Esophagus muscularis mucosa (tissue), 4 donors: ENCODE measurements at regions of chr7 and their contacts with region 1.

Region 1: GRCh38 chr7:150988230-150989226 is 2.3 kb upstream of the NOS3 start:
- DNase-seq: no peak
- H3K4me3 ChIP-seq: peak overlapping the region in 2 of 4 donors; percentile 5 to 41
- H3K27ac ChIP-seq: peak overlapping the region in 2 of 4 donors; percentile 51 to 60
- H3K4me1 ChIP-seq: peaks cover 30 to 40% (median 36%) of the 10 kb centered on the region in 4 donors
- H3K27me3 ChIP-seq: peaks cover 0 to 5% (median 0%) of the 10 kb centered on the region in 4 donors
- CTCF ChIP-seq: peak; percentile 90 to 96 (median 92)
- EP300 ChIP-seq: no peak
- POLR2A ChIP-seq: no peak

Region 2: GRCh38 chr7:150898475-150899011 is 90.0 kb before region 1 on chr7:
- intact Hi-C with region 1: loop called (anchors 2 kb)
- DNase-seq: peak; percentile 95
- H3K4me3 ChIP-seq: no peak overlapping the region
- H3K27ac ChIP-seq: no peak overlapping the region
- H3K4me1 ChIP-seq: peaks cover 16 to 38% (median 35%) of the 10 kb centered on the region in 4 donors
- H3K27me3 ChIP-seq: peaks cover 0 to 26% (median 0%) of the 10 kb centered on the region in 4 donors
- CTCF ChIP-seq: peak in 2 of 3 experiments; percentile 91 to 96
- EP300 ChIP-seq: no peak
- POLR2A ChIP-seq: no peak

Region 3: GRCh38 chr7:150962553-150963399 is 25.8 kb before region 1 on chr7:
- intact Hi-C with region 1: loop called (anchors 2 kb)
- DNase-seq: no peak
- H3K4me3 ChIP-seq: no peak overlapping the region
- H3K27ac ChIP-seq: peak overlapping the region; percentile 79 to 82 (median 80)
- H3K4me1 ChIP-seq: peaks cover 56 to 84% (median 78%) of the 10 kb centered on the region in 4 donors
- H3K27me3 ChIP-seq: peaks cover 0 to 14% (median 0%) of the 10 kb centered on the region in 4 donors
- CTCF ChIP-seq: peak; percentile 95 to 99 (median 96)
- EP300 ChIP-seq: no peak
- POLR2A ChIP-seq: no peak

Region 4: DNA sequence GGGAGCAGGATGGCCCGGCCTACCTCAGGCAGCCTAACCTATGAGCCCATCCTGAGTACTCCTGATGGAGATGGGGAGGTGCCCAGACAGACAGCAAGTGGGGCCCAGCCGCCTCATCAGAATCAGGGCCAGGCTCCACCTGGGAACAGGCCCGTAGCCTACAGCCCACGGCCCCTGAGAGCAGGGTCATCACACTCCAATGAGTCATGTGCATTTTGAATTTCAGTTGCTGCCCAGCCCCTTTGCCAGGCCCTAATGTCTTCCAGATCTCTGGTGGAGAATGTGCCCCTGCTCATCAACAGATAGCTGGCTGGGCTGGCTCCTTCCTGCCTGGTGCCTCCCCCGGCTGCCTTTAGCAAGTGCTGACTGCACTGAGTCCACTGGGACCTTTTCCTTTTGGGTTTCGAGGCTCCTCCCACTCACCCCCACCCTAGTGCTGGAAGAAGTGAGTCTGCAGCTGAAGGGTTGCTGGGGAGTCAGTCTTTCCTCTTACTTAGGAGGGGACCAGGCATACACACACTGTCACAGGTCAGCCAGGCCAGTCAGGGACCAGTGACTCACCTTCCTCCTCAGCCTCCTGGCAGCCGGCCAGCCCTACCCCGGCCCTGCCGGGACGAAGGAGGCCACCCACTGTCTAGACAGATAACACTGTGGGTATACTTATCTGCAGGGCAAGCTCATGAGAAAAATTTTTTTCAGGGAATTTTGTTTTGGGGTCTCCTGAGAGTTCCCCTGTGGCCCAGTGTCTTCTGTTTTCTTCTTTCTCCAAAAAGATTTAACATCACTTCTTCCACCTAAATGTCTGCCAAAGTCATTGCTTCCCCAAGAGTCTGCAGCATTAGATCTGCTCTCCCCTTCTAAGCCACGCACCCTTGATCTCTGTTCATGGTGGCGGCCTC is 50.7 kb after region 1 on chr7:
- intact Hi-C with region 1: no loop called
- DNase-seq: no peak
- H3K4me3 ChIP-seq: no peak overlapping the region
- H3K27ac ChIP-seq: peak overlapping the region; percentile 22 to 50 (median 28)
- H3K4me1 ChIP-seq: peaks cover 17 to 19% (median 18%) of the 10 kb centered on the region in 4 donors
- H3K27me3 ChIP-seq: no peaks in the 10 kb centered on the region
- CTCF ChIP-seq: no peak
- EP300 ChIP-seq: no peak
- POLR2A ChIP-seq: no peak